PC-3 (cell line): ENCODE measurements at regions of chr2 and their contacts with region 1.

Region 1: DNA sequence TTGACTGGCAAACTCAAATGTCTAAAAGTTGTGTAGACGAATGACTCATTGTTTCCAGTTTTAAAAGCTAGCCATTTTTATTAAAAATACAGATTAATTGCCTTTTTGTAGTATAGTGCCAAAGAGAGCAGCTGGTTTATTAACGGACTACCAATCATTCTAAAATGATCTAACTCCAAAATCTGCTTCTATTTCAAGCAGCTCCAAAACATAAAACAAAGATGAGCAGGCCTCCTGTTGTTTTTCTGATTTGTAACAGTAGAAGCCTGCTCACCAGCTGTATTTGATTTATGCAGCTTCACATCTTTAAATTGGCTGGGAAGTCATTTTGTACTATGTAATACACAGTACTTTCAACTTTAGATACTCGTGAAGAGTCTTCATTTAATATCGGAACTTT is 171.8 kb downstream of the UBR3 start:
- DNase-seq: no peak
- ATAC-seq: no peak
- H3K4me3 ChIP-seq: no peak overlapping the region
- H3K27ac ChIP-seq: no peak overlapping the region
- H3K4me1 ChIP-seq: no peaks in the 10 kb centered on the region
- H3K27me3 ChIP-seq: no peaks in the 10 kb centered on the region
- CTCF ChIP-seq: no peak

Region 2: GRCh38 chr2:169109502-169110409 is 889.3 kb before region 1 on chr2:
- CTCF ChIA-PET with region 1: no interaction called
- POLR2A ChIA-PET with region 1: no interaction called
- intact Hi-C with region 1: no loop called
- DNase-seq: peak; percentile 86
- ATAC-seq: peak; percentile 98
- H3K4me3 ChIP-seq: no peak overlapping the region
- H3K27ac ChIP-seq: no peak overlapping the region
- H3K4me1 ChIP-seq: peaks cover 13% of the 10 kb centered on the region; the same call in 1 of the 2 replicates
- H3K27me3 ChIP-seq: no peaks in the 10 kb centered on the region
- CTCF ChIP-seq: peak; percentile 95

Region 3: GRCh38 chr2:170013802-170014551 is 14.9 kb after region 1 on chr2:
- CTCF ChIA-PET with region 1: no interaction called
- POLR2A ChIA-PET with region 1: interaction called, 12 read pairs
- intact Hi-C with region 1: no loop called
- DNase-seq: no peak
- ATAC-seq: no peak
- H3K4me3 ChIP-seq: no peak overlapping the region
- H3K27ac ChIP-seq: no peak overlapping the region
- H3K4me1 ChIP-seq: no peaks in the 10 kb centered on the region
- H3K27me3 ChIP-seq: no peaks in the 10 kb centered on the region
- CTCF ChIP-seq: no peak